ENCODE measurements at regions of chr1 and their contacts with region 1.

Region 1: DNA sequence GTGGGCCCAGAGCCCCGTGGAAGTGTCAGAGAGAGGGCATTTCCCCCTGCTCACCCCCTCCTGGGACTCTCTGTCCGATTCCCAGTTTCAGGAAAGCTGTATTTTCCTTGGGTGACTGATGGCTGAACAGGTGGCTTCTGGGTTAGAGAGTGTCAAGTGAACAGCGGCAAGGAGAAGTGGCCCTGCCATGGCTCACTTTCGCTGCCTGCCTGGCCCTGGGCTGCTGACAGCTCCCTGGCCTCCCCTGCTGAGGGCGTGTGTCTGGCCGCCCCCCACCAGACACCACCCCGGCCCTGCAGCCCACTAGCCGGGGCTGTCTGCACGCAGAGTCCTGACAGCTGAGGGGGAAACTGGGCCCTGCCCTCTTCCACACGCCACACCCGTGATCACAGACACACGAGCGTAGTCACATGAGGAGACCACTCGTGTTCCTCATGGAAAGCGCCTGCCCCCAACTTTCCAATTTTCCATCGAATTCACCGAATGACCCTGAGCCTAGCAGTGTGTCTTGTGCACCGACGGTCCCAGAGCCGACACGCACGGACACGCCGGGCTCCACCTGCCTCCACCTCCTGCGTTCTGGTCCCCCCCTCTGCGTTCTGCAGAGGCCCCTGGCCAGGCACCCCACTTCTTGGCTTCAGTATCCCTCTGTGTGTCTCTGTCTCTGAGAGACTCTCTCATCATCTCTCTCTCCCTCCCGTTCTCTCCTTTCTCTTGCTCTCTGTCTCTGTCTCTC is 60.6 kb upstream of the CASZ1 start:
- DNase-seq: no peak

Region 2: GRCh38 chr1:10585948-10586524 is 271.0 kb before region 1 on chr1:
- intact Hi-C with region 1: no loop called
- DNase-seq: peak in 1 of 10 donors; percentile 7

Region 3: DNA sequence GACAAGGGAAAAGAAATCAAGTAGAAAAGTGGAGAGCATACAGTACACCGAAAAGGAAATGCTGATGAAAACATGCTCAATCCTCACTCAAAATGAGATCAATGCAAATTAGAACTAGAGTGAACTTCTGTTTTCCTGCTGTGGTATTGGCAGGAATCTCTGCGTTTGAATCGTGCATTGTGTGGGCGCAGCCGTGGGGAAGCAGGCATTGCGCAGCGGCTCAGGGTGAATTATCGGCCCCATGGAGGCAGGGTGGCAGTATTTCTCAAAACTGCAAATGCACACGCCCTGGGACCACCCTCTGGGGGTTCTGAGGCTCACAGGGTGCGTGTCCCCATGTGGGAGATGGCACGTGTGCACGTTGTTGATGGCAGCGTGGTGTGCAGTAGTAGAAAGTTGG is 241.7 kb before region 1 on chr1:
- intact Hi-C with region 1: loop called (anchors 10 kb)
- DNase-seq: peak in 4 of 10 donors; percentile 27 to 88 (median 57)

Region 4: DNA sequence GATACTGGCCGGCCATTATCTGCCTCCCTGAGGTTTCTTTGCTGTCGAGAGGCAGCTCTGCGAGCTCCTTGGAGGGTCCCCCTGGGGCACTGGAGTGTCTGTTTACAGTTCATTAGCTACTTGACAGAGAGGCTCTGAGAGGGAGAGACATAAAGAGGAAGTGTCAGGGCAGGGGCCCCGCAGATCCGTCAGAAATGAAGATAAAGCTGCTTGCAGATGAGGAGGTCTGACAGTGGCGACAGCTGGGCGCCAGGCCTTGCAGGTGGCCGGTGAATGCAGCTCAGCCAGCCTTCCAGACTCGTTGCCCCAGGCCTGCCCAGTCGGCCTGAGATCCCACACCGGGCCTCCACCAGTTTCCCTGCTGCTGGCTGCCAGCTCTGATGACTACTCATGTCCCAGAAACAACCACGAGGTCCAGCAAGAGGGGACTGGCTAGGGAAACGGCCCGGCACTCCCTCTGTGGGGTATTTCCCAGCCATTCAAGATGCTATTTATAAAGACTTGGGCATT is 706.6 kb after region 1 on chr1:
- intact Hi-C with region 1: no loop called
- DNase-seq: peak in 2 of 10 donors; percentile 81 to 82